HEK293 (cell line): ENCODE measurements at regions of chr15 and their contacts with region 1.

Region 1: GRCh38 chr15:62125773-62126172 is 39.3 kb downstream of the C2CD4B start:
- H3K4me3 ChIP-seq: no peak overlapping the region
- H3K27ac ChIP-seq: no peak overlapping the region
- H3K4me1 ChIP-seq: no peaks in the 10 kb centered on the region
- CTCF ChIP-seq: no peak

Region 2: DNA sequence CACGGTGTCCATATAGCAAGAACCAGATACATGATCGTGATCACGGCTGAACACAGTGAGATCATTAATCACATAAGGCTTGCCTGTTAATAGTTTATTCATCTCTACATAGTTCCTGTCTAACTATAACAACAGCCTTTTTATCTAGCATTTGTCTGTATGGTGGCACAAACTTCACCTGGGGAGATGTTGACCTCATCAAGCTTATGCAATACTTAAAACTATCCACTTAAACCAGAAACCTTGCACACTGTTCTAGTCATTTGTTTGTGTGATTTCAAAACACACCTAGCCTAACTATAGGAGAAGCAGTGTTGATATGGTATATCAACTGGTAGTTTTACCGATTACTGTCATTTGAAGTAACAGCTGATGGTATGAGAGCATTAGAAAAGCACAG is 190.3 kb before region 1 on chr15:
- CTCF ChIA-PET with region 1: no interaction called
- POLR2A ChIA-PET with region 1: no interaction called
- H3K4me3 ChIP-seq: no peak overlapping the region
- H3K27ac ChIP-seq: no peak overlapping the region
- H3K4me1 ChIP-seq: no peaks in the 10 kb centered on the region
- CTCF ChIP-seq: no peak

Region 3: GRCh38 chr15:62138124-62138523 is 12.4 kb after region 1 on chr15:
- CTCF ChIA-PET with region 1: interaction called, 15 read pairs
- POLR2A ChIA-PET with region 1: interaction called, 7 read pairs
- H3K4me3 ChIP-seq: no peak overlapping the region
- H3K27ac ChIP-seq: no peak overlapping the region
- H3K4me1 ChIP-seq: peaks cover 19% of the 10 kb centered on the region
- CTCF ChIP-seq: no peak

Region 4: GRCh38 chr15:62254137-62254934 is 128.6 kb after region 1 on chr15:
- CTCF ChIA-PET with region 1: interaction called, 13 read pairs
- POLR2A ChIA-PET with region 1: no interaction called
- H3K4me3 ChIP-seq: no peak overlapping the region
- H3K27ac ChIP-seq: no peak overlapping the region
- H3K4me1 ChIP-seq: no peaks in the 10 kb centered on the region; the same call in 1 of the 2 replicates
- CTCF ChIP-seq: 0 out of 2 replicates have a peak, but pooled peaks have one; percentile 11